ENCODE measurements at regions of chr6 and their contacts with region 1.

Region 1: GRCh38 chr6:111642463-111643158 is 36.9 kb upstream of the TRAF3IP2 start:
- DNase-seq: peak; percentile 70
- ATAC-seq: peak; percentile 97
- H3K4me3 ChIP-seq: no peak overlapping the region
- H3K27ac ChIP-seq: no peak overlapping the region
- H3K4me1 ChIP-seq: peaks cover 0 to 7% of the 10 kb centered on the region in 2 experiments; a peak in 2 of 4 replicates
- H3K27me3 ChIP-seq: no peaks in the 10 kb centered on the region
- CTCF ChIP-seq: peak; percentile 78 to 82 (median 79)
- POLR2A ChIP-seq: no peak
- RAD21 ChIP-seq: peak; percentile 94

Region 2: GRCh38 chr6:110482774-110483398 is 1159.7 kb before region 1 on chr6:
- CTCF ChIA-PET with region 1: no interaction called
- POLR2A ChIA-PET with region 1: no interaction called
- RAD21 ChIA-PET with region 1: interaction called in 1 of 2 experiments, 11 read pairs
- intact Hi-C with region 1: no loop called
- DNase-seq: no peak
- ATAC-seq: no peak
- H3K4me3 ChIP-seq: no peak overlapping the region
- H3K27ac ChIP-seq: no peak overlapping the region
- H3K4me1 ChIP-seq: no peaks in the 10 kb centered on the region
- H3K27me3 ChIP-seq: no peaks in the 10 kb centered on the region
- CTCF ChIP-seq: no peak
- POLR2A ChIP-seq: no peak
- RAD21 ChIP-seq: no peak

Region 3: DNA sequence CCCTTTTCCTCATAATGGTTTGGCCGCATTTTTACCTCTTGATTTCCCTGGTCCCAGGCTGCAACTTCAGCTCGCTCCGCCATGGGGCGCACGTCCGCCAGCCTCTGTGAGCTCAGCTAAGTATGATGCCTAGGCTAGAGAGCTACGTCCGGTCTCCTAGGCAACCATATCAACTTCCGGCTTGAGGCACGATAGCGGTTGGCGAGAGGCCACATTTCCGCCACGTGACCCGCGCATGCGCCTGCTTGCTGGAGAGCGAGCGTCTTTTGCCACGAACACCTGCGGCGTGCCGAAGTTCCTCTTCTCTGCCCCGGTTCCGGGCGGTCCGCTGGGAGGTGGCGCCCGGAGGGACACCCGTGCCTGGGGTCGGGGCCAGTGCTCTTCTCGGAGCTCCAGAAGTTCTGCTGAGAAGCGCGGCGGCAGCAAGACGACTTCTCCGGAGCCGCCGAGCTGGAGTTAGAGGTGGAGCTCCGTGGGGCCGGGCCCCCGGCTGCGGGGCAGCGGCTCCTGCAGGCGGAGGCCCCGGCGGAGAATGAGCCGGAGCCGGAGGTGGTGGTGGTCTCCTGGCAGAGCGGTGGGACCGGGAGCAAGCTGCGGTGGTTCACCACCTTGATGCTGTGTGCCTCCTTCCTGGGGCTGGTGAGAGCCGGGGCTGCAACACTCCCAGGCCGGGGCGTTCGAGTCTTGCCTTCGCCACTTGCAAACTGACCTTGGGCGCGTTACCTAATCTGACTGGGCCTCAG is 383.4 kb before region 1 on chr6:
- CTCF ChIA-PET with region 1: interaction called, 25 read pairs
- POLR2A ChIA-PET with region 1: interaction called, 3 read pairs
- RAD21 ChIA-PET with region 1: interaction called, 3 to 8 read pairs
- intact Hi-C with region 1: loop called (anchors 1 kb)
- DNase-seq: peak; percentile 98
- ATAC-seq: peak; percentile 96
- H3K4me3 ChIP-seq: peak overlapping the region; percentile 72 to 82
- H3K27ac ChIP-seq: peak overlapping the region; percentile 61
- H3K4me1 ChIP-seq: peaks cover 14 to 43% of the 10 kb centered on the region in 2 experiments
- H3K27me3 ChIP-seq: no peaks in the 10 kb centered on the region
- CTCF ChIP-seq: peak; percentile 91 to 96 (median 93)
- POLR2A ChIP-seq: peak; percentile 74
- RAD21 ChIP-seq: peak; percentile 97

Region 4: DNA sequence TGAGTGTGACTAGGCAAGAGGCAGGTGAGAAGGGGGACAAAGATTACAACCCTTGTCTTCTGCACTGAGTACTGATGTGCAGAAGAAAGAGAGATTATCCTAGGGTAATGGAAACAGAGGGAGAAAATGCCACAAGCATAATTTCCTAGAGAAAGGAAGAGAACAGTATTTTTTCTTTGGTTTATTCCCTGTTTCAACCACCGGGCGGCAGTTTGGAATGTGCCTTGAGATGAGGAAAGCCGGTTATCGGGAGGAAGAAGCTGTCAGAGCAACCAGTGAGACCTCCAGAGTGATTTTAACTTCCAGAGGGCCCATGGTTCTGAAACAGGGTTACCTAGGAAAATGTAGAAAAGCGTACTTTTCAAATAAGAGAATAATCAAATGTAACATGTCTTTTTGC is 281.0 kb before region 1 on chr6:
- CTCF ChIA-PET with region 1: no interaction called
- POLR2A ChIA-PET with region 1: no interaction called
- RAD21 ChIA-PET with region 1: no interaction called
- intact Hi-C with region 1: loop called (anchors 1 kb)
- DNase-seq: peak; percentile 10
- ATAC-seq: peak; percentile 73
- H3K4me3 ChIP-seq: no peak overlapping the region
- H3K27ac ChIP-seq: no peak overlapping the region
- H3K4me1 ChIP-seq: no peaks in the 10 kb centered on the region
- H3K27me3 ChIP-seq: no peaks in the 10 kb centered on the region
- CTCF ChIP-seq: peak; percentile 59 to 71 (median 63)
- POLR2A ChIP-seq: no peak
- RAD21 ChIP-seq: peak; percentile 77

Region 5: DNA sequence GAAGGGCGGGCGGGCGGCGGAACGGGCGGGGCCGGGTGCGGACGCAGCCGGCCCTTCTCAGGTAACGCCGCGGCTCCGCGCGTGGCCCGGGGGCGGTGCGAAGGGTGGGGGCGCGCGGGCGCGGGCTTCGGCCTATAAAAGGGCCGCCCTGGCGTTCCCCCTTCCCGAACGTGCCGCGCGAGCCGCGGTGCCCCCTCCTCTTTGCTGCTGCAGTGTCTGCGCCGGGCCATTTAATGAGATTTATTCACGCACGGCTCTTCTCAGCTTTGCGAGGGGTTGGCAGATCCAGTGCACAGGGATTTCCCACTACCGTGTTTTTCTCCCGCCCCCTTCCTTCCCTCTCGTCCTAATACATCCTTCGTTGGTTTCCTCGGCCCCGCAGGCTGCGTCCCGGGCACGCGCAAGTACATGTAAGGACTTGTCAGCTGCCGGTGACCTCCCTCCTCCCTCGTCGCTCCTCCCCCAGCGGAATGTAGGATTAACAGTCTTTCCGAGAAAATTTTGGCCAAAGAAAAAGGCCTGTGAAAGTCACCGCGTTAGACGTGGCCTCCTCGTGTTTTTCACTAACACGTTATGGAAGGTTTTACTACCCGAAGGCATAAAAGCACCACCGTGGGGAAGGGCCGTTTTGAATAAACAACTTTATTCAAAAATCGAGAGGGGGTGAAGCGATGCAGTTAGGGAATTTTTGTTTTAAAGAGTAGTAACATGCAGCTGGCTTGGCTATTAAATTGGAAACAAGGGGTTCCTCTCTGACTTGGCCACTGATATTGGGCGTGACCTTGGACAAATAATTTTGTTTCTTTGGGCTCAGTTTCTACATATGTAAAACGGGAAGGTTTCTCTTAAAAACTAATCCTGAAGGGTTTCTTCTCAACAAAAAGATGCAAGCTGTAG is 158.6 kb before region 1 on chr6:
- CTCF ChIA-PET with region 1: interaction called, 6 read pairs
- POLR2A ChIA-PET with region 1: no interaction called
- RAD21 ChIA-PET with region 1: interaction called in 1 of 2 experiments, 4 read pairs
- intact Hi-C with region 1: loop called (anchors 5 kb)
- DNase-seq: peak; percentile 72
- ATAC-seq: peak; percentile 79
- H3K4me3 ChIP-seq: peak overlapping the region; percentile 68 to 85
- H3K27ac ChIP-seq: peak overlapping the region; percentile 86
- H3K4me1 ChIP-seq: peaks cover 18 to 33% of the 10 kb centered on the region in 2 experiments
- H3K27me3 ChIP-seq: no peaks in the 10 kb centered on the region
- CTCF ChIP-seq: no peak
- POLR2A ChIP-seq: peak; percentile 96
- RAD21 ChIP-seq: no peak; the same call in 1 of the 2 replicates

Region 6: DNA sequence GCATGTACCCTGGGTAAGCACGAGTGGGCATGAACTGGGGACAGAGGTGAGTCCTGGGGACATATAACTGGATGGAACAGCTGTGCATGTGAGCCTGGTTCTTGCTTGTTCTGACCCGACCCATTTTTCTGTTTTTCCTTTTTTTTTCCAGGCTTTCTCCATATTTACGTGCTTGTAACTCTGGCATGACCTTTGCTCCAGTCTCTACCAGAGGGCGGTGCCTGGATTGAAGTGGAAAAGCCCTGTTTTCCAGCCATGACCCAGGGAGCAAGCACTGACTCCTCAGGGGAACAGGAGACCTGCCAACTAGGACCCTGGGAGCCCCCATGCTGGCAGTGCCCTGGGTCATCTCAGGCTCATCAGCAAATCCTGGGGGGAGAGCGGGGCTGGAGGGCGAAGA is 44.9 kb before region 1 on chr6:
- CTCF ChIA-PET with region 1: no interaction called
- POLR2A ChIA-PET with region 1: no interaction called
- RAD21 ChIA-PET with region 1: no interaction called
- intact Hi-C with region 1: no loop called
- DNase-seq: no peak
- ATAC-seq: no peak
- H3K4me3 ChIP-seq: no peak overlapping the region
- H3K27ac ChIP-seq: no peak overlapping the region
- H3K4me1 ChIP-seq: peaks cover 7 to 16% of the 10 kb centered on the region in 2 experiments; a peak in 3 of 4 replicates
- H3K27me3 ChIP-seq: no peaks in the 10 kb centered on the region
- CTCF ChIP-seq: no peak
- POLR2A ChIP-seq: no peak
- RAD21 ChIP-seq: no peak

Measured in HCT116 (cell line).